Prostate gland (tissue), 2 donors: ENCODE measurements at regions of chrX and their contacts with region 1.

Region 1: DNA sequence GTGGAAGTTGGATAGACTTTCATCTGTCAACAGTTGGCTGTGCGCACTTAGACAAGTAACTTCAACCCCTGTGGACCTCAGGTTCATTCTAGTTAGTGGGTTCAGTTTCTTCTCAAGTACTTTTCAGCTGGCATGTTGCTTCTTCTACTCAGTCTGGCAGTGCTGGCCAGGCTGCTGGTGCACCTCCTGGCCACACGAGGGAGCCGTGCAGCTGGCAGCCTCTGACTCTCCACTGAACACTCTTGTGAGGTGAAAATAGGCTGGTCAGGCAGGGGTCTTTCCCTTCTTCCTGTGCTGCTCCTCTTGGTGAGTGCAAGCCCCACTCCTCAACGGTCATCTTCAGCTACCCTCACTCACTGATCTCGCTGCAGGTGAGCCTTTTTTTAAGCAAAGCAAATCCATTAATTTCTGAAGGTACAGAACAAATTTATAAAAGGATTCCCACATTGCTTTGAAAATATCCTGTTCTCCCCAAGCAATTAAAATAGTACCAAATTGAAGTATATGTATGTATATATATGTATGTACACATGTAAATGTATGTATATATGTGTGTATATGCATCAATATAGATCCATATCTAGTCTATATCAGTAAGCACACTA is 30.6 kb downstream of the LONRF3 start:
- DNase-seq: peak; percentile 25
- H3K4me3 ChIP-seq: no peak overlapping the region
- H3K27ac ChIP-seq: no peak overlapping the region
- H3K4me1 ChIP-seq: no peaks in the 10 kb centered on the region
- H3K27me3 ChIP-seq: no peaks in the 10 kb centered on the region
- CTCF ChIP-seq: peak; percentile 33 to 60 (median 46)
- POLR2A ChIP-seq: no peak

Region 2: DNA sequence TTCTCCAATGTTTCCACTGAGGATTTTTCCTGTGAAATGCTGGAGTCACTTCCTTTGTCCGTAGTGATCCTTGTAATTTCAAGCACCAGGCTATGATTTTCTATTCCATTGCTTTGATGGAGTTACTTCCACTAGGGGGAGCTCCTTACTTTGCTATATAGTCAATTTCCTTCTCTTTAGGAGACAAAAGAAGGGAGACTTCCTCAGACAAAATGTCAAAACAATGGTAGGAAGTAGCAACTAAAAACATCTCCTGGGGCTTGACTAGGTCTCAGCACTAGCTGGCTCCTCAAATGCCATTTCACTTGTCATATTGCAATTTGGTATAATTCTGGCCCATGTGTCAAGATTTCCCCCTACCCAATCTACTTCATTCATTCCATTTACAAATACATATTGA is 157.3 kb before region 1 on chrX:
- intact Hi-C with region 1: loop called (anchors 5 kb)
- DNase-seq: peak; percentile 25
- H3K4me3 ChIP-seq: no peak overlapping the region
- H3K27ac ChIP-seq: no peak overlapping the region
- H3K4me1 ChIP-seq: no peaks in the 10 kb centered on the region
- H3K27me3 ChIP-seq: no peaks in the 10 kb centered on the region
- CTCF ChIP-seq: peak; percentile 17 to 68 (median 65)
- POLR2A ChIP-seq: no peak

Region 3: GRCh38 chrX:118948270-118948669 is 56.8 kb before region 1 on chrX:
- intact Hi-C with region 1: no loop called
- DNase-seq: no peak
- H3K4me3 ChIP-seq: no peak overlapping the region
- H3K27ac ChIP-seq: no peak overlapping the region
- H3K4me1 ChIP-seq: no peaks in the 10 kb centered on the region
- H3K27me3 ChIP-seq: no peaks in the 10 kb centered on the region
- CTCF ChIP-seq: no peak
- POLR2A ChIP-seq: no peak

Region 4: DNA sequence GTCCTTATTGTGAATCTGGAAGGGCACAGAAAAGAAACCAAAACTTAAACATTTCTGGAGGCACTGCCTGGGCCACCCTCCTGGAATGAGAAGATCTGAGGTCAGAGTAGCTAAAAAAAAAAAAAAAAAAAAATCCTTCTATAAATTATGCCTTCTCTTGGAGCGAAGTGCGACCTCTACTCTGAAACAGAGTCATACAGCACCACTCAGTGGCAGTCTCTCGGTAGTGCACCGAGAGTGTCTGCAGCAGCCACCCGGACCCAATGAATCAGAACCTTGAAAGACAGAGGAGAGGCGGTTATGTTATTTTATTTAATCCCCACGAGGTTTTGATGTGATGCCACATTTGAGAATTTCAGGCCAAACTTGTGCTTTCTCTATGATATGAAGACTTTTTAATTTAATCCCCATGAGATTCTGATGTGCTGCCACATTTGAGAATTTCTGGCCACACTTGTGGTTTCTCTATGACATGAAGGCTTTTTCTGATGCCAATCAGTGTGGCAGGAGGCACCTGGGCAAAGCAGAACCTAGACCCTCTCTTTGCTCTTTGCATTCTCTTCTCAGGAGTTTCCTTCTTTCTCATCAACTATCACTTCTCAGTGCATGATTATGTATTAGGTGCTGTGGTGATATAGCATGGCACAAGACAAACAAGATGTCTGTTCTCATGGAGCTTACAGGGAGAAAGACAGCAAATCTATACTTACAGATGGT is 62.2 kb after region 1 on chrX:
- intact Hi-C with region 1: loop called (anchors 5 kb)
- DNase-seq: peak; percentile 16
- H3K4me3 ChIP-seq: no peak overlapping the region
- H3K27ac ChIP-seq: no peak overlapping the region
- H3K4me1 ChIP-seq: no peaks in the 10 kb centered on the region
- H3K27me3 ChIP-seq: no peaks in the 10 kb centered on the region
- CTCF ChIP-seq: peak in 3 of 4 experiments; percentile 39 to 57 (median 45)
- POLR2A ChIP-seq: no peak